ENCODE measurements at regions of chr20 and their contacts with region 1.

Region 1: GRCh38 chr20:35994994-35995453 is 26.6 kb downstream of the CNBD2 start:
- DNase-seq: peak; percentile 60 to 86 (median 77)
- ATAC-seq: peak; percentile 81 to 89 (median 88)
- H3K4me3 ChIP-seq: no peak overlapping the region
- H3K4me3 Mint-ChIP-seq: no peak overlapping the region
- H3K27ac ChIP-seq: no peak overlapping the region
- H3K27ac Mint-ChIP-seq: peak overlapping the region in 1 of 2 donors; percentile 27
- H3K4me1 ChIP-seq: no peaks in the 10 kb centered on the region
- H3K4me1 Mint-ChIP-seq: peaks cover 3 to 8% (median 7%) of the 10 kb centered on the region in 3 donors
- H3K27me3 ChIP-seq: peaks cover 0 to 5% of the 10 kb centered on the region in 2 experiments
- H3K27me3 Mint-ChIP-seq: peaks cover 0 to 2% of the 10 kb centered on the region in 2 donors

Region 2: DNA sequence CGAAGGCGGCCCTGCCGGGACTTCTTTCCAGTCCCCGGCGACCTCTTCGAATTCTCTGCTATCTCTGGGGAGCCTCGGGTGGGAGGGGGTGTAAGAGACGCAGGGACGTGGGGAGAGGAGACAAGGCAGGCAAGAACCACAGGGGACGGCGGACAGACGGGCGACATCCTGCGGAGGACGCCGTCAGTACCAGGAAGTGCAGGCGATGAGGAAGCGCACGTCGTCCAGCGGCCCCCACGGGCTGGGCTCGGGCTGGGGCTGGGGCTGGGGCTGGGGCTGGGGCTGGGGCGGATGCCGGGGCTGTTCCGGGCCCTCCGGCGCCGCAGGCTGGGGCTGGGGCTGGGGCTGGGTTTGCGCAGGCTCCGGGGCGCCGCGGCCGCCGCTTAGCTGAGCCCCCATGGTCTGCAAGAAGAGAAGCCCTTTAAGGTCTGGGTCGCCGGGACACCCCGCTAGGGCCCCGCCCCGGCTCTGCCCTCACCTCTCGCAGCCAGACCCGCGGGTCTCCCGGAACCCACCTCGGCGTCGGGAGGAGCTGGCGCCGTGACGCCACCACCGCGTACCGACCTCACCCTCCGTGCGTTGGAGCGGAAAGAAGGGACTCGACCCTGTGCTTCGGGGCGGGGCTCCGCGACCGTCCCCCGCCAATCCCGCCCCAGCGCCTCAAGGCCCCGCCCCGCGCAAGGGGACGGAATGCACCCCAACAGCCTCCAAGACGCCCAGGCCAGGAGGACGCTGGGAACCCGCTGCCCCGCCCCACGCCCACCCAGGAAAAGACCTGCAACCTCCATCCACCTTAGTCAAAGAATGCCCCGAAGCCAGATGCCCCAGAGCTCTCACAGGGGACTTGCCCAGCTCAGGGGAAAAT is 717.3 kb before region 1 on chr20 and contains the start of gene MMP24OS:
- CTCF ChIA-PET with region 1: interaction called in 1 of 2 experiments, 16 read pairs
- POLR2A ChIA-PET with region 1: no interaction called
- DNase-seq: peak; percentile 75 to 93 (median 86)
- ATAC-seq: peak; percentile 90 to 93 (median 92)
- H3K4me3 ChIP-seq: peak within 1 kb of the TSS; percentile 65 to 73
- H3K4me3 Mint-ChIP-seq: peak within 1 kb of the TSS; percentile 90 to 95 (median 93)
- H3K27ac ChIP-seq: peak within 1 kb of the TSS; percentile 94
- H3K27ac Mint-ChIP-seq: peak within 1 kb of the TSS; percentile 98 to 99
- H3K4me1 ChIP-seq: peaks cover 0 to 34% of the 10 kb centered on the region in 2 experiments
- H3K4me1 Mint-ChIP-seq: peaks cover 22 to 34% (median 26%) of the 10 kb centered on the region in 3 donors
- H3K27me3 ChIP-seq: no peaks in the 10 kb centered on the region
- H3K27me3 Mint-ChIP-seq: no peaks in the 10 kb centered on the region
- total RNA-seq, gene MMP24OS: 59.5 to 95.5 (median 72.0) TPM

Region 3: GRCh38 chr20:35327074-35327976 is 667.7 kb before region 1 on chr20:
- CTCF ChIA-PET with region 1: no interaction called
- POLR2A ChIA-PET with region 1: interaction called in 1 of 2 experiments, 12 read pairs
- DNase-seq: no peak
- ATAC-seq: no peak
- H3K4me3 ChIP-seq: no peak overlapping the region
- H3K4me3 Mint-ChIP-seq: no peak overlapping the region
- H3K27ac ChIP-seq: no peak overlapping the region
- H3K27ac Mint-ChIP-seq: no peak overlapping the region
- H3K4me1 ChIP-seq: no peaks in the 10 kb centered on the region
- H3K4me1 Mint-ChIP-seq: no peaks in the 10 kb centered on the region
- H3K27me3 ChIP-seq: no peaks in the 10 kb centered on the region
- H3K27me3 Mint-ChIP-seq: no peaks in the 10 kb centered on the region

Region 4: GRCh38 chr20:35954200-35954906 is 40.7 kb before region 1 on chr20 and contains the start of gene SCAND1:
- CTCF ChIA-PET with region 1: interaction called in 1 of 2 experiments, 16 read pairs
- POLR2A ChIA-PET with region 1: no interaction called
- DNase-seq: peak; percentile 91 to 99 (median 95)
- ATAC-seq: peak; percentile 86 to 91 (median 88)
- H3K4me3 ChIP-seq: peak within 1 kb of the TSS; percentile 82 to 87
- H3K4me3 Mint-ChIP-seq: peak within 1 kb of the TSS; percentile 95 to 99 (median 99)
- H3K27ac ChIP-seq: peak within 1 kb of the TSS; percentile 98
- H3K27ac Mint-ChIP-seq: peak within 1 kb of the TSS; percentile 99 to 100
- H3K4me1 ChIP-seq: peaks cover 14 to 29% of the 10 kb centered on the region in 2 experiments
- H3K4me1 Mint-ChIP-seq: peaks cover 20 to 23% (median 21%) of the 10 kb centered on the region in 3 donors
- H3K27me3 ChIP-seq: no peaks in the 10 kb centered on the region
- H3K27me3 Mint-ChIP-seq: no peaks in the 10 kb centered on the region
- total RNA-seq, gene SCAND1: 50.0 to 78.8 (median 70.8) TPM

Region 5: DNA sequence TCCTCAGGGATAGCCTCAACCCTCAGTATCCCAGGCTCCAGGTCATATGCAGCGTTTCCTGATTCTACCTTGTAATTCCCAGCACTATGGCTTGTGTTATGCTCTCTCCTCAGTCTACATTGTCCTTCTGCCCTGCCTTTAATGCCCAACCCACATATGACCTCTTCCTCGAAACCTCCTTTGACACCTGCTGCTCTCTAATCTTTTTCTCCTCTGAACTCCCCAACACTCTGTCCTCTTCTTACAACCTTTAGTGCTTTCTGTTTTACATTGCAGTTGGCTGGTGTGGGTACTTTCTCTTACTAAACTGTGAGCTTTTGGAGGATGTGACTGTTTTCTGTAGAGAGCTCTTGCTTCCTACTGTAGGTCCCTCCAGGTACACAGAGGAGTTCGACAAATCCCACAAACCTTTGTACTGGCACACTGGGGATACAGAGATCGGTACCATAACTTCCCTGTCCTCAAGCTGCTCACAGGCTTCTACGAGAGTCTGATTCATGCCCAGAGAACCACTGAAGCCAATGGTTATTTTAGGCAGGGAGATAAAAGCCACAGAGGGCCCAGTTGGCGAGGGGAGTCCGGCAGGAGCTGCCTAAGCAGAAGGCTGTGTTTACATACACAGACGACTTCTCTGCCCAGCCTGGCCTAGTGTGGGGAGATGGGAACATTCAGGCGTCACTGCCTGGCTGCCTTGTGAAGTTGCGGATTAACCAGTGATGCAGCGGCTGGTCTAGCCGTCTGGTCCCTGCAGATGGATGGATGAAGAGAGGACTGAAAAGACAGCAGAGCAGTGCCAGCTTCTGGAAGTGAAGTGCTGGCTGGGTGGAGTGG is 151.1 kb after region 1 on chr20:
- CTCF ChIA-PET with region 1: interaction called in 1 of 2 experiments, 12 read pairs
- POLR2A ChIA-PET with region 1: no interaction called
- DNase-seq: no peak
- ATAC-seq: no peak
- H3K4me3 ChIP-seq: no peak overlapping the region
- H3K4me3 Mint-ChIP-seq: no peak overlapping the region
- H3K27ac ChIP-seq: no peak overlapping the region
- H3K27ac Mint-ChIP-seq: no peak overlapping the region
- H3K4me1 ChIP-seq: no peaks in the 10 kb centered on the region
- H3K4me1 Mint-ChIP-seq: no peaks in the 10 kb centered on the region
- H3K27me3 ChIP-seq: peaks cover 0 to 26% of the 10 kb centered on the region in 2 experiments
- H3K27me3 Mint-ChIP-seq: peaks cover 21 to 27% of the 10 kb centered on the region in 2 donors

Region 6: DNA sequence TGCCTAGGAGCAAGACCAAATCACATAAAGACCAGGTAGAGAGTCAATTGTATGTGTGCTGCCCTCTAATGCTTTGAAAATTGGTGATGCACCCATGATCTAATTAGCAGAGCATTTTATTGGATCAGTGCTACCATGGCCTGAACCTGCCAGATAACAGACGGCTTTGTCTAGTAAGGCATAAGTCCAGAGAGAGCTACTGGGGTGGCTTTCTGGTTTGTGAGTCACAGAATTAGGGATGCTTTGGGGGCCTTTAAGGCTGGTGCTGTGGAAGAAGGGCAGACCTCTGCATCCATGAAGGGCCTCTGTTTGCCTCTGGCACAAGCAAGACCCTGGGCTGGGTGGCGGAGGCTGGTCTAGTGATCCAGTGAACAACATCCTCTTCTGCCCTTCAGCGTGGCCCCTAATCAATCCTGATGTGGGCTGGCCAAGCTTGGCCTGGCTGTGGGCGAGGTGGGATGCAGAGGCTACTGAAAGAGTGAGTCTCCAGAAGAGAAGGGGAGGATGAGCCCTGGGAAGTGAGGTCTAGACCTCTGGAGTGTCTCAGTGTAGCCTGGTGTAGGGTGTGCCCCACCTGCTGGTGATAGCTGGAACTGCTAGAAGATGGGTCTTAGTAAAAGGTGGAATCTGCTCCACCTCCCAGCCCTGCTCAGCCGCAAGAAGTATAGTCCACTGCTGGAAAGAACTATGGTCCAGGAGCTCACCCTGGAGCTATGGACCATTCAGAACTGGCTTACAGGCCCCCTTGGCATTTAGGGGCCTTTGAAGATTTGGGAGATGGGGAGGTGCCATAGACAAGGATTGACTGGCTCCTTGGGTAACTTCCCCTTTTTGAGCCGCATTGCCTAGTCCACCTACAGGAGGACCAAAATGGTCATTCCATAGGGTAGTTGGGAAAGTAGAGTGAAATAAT is 204.6 kb after region 1 on chr20:
- CTCF ChIA-PET with region 1: interaction called, 4 to 13 read pairs
- POLR2A ChIA-PET with region 1: no interaction called
- DNase-seq: peak; percentile 17 to 81 (median 58)
- ATAC-seq: peak; percentile 72 to 76 (median 72)
- H3K4me3 ChIP-seq: no peak overlapping the region
- H3K4me3 Mint-ChIP-seq: no peak overlapping the region
- H3K27ac ChIP-seq: no peak overlapping the region
- H3K27ac Mint-ChIP-seq: no peak overlapping the region
- H3K4me1 ChIP-seq: peaks cover 0 to 9% of the 10 kb centered on the region in 2 experiments
- H3K4me1 Mint-ChIP-seq: peaks cover 4 to 13% (median 5%) of the 10 kb centered on the region in 3 donors
- H3K27me3 ChIP-seq: peaks cover 0 to 28% of the 10 kb centered on the region in 2 experiments
- H3K27me3 Mint-ChIP-seq: peaks cover 14 to 20% of the 10 kb centered on the region in 2 donors

Measured in T-cell (primary cell).